ENCODE measurements at regions of chr12 and their contacts with region 1.

Region 1: DNA sequence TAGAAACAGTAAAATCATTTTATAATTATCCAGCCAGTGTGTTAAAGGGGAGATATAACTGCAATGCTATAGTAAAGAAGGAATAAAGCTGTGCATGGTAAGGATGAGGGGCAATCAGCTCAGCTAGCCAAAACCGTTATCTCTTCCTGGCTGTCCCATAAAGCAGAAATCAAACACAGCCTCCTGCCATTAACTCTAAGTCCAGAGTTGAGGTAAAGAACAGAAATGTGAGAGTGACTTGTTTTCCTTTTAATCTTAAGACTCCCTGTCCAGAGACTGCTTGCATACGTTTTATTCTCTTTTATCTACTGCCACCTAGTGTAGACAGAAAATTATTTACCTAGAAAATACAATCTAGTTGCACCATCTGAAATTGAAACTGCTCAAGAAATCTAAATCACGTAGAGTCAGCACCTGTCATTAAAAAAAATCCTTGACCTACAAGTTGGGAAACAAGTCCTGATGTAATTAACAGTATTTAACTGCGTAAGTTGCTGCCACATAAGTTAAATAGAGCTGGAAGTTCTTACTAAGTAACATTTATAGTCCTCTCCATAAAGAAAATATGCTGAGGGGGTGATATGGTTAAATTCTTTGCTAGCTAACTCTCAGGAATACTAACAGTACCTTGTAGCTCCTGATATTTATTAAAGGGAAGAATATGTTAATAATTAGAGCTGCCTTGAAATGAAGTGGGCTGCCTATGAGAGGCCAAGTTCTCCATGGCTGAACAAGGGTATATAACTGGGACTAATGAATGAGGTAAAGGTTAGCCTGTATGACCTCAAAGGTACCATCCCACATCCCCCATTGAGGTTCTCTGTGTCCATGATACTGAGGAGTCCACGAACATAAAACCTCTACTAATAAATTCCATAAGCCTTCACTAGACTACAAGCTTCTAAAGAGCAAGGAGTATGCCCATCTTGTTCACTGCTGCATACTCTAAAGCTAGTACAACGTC is 62.7 kb downstream of the GALNT4 start:
- DNase-seq: peak; percentile 87

Region 2: DNA sequence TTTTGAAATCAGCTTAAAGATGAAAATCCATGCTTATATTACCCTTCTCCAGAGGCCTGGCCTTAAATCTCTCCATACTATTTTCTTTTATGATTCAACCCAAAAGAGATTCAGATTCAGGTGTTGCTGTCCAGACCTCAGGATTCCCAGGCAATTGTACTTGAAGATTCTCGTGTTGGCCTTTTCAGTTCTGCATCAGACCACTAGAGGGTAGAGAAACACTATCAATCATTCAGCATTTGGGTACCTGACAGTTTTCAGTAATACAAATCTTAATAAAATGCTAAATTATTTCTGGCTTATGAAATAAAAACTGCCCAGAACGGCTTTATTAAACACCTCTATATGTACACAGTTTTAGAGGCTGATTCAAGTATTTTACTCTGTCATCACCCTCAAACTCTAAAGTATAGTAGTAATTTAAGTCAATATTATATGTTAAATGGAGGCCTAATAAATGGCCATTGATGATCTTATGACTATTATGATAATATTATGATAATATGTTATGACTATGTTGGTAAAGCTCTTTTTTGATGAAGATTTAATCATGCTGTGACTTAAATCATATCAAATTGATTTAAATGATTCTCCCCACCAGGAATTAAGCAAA is 410.8 kb before region 1 on chr12:
- in situ Hi-C with region 1: loop called (anchors 25 kb)
- DNase-seq: peak; percentile 82

Region 3: GRCh38 chr12:89632778-89633177 is 170.8 kb after region 1 on chr12:
- in situ Hi-C with region 1: no loop called
- DNase-seq: no peak

Measured in SK-MEL-5 (cell line).